ENCODE measurements at regions of chr6 and their contacts with region 1.

Region 1: DNA sequence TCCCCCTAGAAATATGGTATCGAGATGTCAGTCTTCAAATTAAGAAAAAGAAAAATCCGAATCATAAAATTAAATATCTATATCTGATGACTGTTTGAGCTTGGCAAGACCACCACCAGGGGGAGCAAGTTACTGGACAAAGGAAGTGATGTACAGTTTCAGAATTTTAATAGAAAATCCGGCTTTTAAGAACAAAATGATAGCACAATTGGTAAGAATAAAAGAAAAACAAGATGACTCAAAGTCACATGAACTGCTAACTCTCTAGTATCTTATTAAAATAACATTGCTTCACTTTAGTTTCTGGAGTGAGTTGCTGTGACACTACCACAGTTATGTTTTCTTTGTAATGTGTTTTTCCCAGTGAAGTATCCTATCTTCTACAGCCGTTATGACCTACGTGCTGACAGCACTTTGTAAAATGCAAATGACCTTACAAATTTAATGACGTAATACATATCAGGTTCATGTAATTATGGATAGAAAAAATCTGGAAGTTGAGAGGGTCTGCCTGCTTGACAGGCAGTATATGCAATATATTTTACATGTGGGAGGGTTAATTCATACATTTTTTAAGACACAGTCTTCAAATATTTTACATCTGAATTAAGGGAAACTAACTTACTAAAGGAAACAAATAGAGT is 405.3 kb upstream of the HS3ST5 start:
- DNase-seq: peak; percentile 48
- ATAC-seq: no peak

Region 2: GRCh38 chr6:114634016-114634415 is 114.1 kb before region 1 on chr6:
- intact Hi-C with region 1: no loop called
- DNase-seq: no peak
- ATAC-seq: no peak

Region 3: DNA sequence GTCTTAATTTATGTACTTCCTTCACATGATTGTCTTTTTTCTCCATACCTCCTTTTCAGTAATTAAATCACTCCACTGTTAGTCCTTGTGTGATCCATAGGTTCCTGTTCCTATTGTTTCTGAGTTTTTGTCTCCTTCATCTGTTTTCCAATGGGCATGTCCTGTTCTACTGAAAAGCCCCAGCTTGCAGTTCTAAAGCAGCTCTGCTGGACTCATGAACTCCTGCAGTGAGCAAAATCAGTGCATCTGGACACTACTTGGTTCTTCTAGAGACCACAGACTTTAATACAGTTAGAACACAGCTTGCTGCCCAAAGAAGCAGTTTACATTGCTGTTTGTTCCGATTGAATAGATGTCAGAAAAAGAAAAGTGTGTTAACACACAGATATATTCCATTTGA is 188.0 kb after region 1 on chr6:
- intact Hi-C with region 1: no loop called
- DNase-seq: no peak
- ATAC-seq: no peak

Region 4: DNA sequence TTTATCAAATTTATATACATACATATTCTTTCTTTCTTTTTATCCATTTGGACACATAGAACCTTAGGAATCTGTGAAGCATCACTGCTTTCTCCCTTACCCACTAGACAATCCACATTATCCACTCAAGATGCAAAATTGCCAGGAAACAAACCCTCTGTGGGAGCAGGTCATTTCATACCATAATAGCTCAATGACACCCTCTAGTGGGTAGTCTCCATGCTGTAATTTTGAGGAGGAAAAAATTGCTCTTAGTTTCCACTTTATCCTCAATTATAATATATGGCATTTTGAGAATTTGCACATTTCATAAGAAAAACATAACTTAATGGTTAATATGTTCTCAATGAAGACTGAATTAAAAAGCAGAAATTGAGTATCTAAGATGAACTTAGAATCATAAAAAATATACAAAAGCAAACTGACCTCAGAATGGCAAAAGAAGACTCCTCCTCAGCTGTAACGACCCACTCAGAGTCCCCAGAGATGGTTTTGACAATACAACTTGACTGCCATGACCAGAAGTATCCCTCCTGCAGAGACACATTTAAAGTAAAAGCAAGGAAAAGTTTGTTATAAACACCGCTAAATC is 1148.5 kb after region 1 on chr6:
- intact Hi-C with region 1: loop called (anchors 1 to 5 kb)
- DNase-seq: no peak
- ATAC-seq: no peak